Cardiac septum (tissue), 1 donor: ENCODE measurements at regions of chrX and their contacts with region 1.

Region 1: GRCh38 chrX:2589186-2590030 is 88.6 kb upstream of the DHRSX start:
- DNase-seq: no peak

Region 2: GRCh38 chrX:2286731-2287130 is 302.7 kb before region 1 on chrX:
- intact Hi-C with region 1: loop called (anchors 5 kb)
- DNase-seq: no peak

Region 3: GRCh38 chrX:2325076-2325784 is 264.2 kb before region 1 on chrX:
- intact Hi-C with region 1: no loop called
- DNase-seq: peak; percentile 86

Region 4: DNA sequence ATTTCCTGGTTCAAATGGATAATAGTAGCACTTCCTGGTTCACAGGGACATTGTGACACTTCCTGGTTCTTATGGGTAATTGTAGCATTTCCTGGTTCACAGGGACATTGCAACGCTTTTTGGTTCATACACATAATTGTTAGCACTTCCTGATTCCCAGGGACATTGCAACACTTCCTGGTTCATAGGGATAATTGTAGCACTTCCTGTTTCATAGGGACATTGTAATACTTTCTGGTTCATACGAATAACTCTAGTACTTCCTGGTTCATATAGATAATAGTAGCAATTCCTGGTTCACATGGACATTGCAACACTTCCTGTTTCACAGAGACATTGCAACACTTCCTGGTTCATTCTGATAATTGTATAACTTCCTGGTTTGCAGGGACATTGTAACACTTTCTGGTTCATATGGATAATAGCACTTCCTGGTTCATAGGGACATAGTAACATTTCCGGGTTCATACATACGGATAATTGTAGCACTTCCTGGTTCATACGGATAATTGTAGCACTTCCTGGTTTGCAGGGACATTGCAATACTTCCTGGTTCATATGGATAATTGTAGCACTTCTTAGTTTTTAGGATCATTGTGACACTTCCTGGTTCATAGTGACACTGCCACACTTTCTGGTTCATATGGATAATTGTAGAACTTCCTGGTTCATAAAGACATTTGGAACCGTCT is 40.1 kb after region 1 on chrX:
- intact Hi-C with region 1: no loop called
- DNase-seq: no peak

Region 5: DNA sequence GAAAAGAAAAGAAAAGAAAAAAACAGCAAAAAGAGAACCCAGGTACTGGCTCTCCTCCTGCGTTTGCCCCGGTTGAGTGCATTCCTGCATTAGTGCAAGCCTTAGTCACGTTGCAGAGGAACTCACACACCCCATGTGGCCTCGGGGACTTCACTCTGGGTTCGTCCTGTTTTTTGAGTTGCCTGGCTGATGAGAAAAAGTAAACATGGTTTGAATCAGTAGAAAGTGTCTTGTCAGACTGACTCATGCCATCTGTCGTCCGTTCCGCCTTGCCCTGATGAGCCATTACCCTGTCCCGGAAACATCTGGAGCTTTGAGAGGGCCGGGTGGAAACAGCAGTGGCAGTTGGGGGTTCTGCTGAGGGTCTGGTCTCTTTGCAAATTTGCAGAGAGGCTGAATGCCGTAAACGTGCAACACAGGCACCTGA is 117.9 kb after region 1 on chrX:
- intact Hi-C with region 1: no loop called
- DNase-seq: no peak